ENCODE measurements at regions of chr11 and their contacts with region 1.

Region 1: DNA sequence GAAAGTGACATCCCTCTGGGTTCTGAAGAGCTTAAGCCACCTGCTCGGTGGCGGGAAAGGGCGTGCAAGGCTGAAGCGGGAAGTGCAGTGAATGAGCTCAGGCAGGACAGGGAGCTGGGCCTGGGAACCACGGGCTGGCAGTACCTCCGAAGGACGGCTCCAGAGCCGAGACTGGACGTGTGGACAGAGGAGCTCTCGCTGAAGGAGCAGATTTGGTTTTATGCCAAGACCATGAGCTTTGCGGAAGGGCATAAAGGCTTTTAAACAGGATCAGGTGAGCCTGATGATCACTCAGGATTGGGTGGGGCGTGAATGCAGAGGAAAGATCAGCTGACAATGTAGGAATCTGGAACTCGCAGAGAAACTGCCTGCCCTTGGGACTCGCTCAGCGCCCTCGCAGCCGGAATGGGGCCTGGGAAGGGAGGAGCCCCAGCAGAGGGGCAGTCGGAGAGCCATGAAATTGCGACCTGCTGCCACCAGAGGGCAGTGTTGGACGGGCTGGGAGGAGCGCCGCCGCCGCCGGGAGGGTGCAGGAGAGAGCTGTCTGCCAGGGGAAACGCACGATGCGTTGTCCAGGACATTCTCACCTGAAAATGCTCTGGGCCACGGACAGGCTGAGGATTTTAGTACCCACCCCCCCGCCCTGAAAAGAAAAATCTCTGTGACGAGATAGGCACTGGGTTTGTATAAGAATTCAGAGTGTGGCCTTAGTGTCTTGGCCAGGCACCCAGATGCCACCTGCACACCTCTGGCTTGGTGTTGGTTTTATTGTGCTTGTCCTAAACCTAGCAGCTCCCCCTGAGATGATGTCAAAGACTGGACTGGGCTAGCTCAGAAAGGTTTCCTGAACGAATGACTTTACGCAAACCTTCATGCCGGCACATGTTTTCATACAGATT is 324.4 kb downstream of the NTM start:
- DNase-seq: peak; percentile 92
- ATAC-seq: peak; percentile 85
- H3K4me3 Mint-ChIP-seq: peak overlapping the region; percentile 38
- H3K27ac Mint-ChIP-seq: no peak overlapping the region
- H3K4me1 Mint-ChIP-seq: peaks cover 9% of the 10 kb centered on the region
- H3K27me3 Mint-ChIP-seq: peaks cover 45% of the 10 kb centered on the region
- CTCF ChIP-seq: peak; percentile 96

Region 2: DNA sequence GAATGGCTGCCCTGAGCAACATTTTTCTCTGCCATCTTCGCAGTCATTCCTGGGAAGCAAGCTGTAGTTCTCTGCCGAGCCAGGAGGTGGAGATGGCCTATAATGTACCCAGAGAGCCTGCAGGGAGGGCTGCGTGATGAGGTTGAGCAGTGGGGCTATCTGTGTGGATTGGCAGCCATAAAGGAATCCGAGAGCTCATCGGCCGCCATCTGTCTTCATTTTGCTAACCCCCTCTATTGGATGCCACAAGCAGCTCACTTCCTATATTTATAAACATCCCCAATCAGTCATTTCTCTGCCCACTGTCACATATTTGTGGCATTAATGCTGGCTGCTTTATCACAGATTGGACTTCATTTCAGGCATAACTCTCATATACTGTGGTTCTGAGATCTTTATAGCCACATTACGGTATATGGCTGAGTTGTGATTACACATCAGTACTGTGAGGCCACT is 114.8 kb before region 1 on chr11:
- CTCF ChIA-PET with region 1: interaction called, 22 read pairs
- POLR2A ChIA-PET with region 1: no interaction called
- DNase-seq: peak; percentile 70
- ATAC-seq: peak; percentile 97
- H3K4me3 Mint-ChIP-seq: no peak overlapping the region
- H3K27ac Mint-ChIP-seq: no peak overlapping the region
- H3K4me1 Mint-ChIP-seq: peaks cover 40% of the 10 kb centered on the region
- H3K27me3 Mint-ChIP-seq: no peaks in the 10 kb centered on the region
- CTCF ChIP-seq: peak; percentile 68

Region 3: GRCh38 chr11:131724436-131724975 is 29.7 kb after region 1 on chr11:
- CTCF ChIA-PET with region 1: interaction called, 10 read pairs
- POLR2A ChIA-PET with region 1: no interaction called
- DNase-seq: no peak
- ATAC-seq: no peak
- H3K4me3 Mint-ChIP-seq: no peak overlapping the region
- H3K27ac Mint-ChIP-seq: no peak overlapping the region
- H3K4me1 Mint-ChIP-seq: peaks cover 6% of the 10 kb centered on the region; the same call in 1 of the 2 replicates
- H3K27me3 Mint-ChIP-seq: no peaks in the 10 kb centered on the region
- CTCF ChIP-seq: no peak

Region 4: GRCh38 chr11:131748151-131749050 is 53.6 kb after region 1 on chr11:
- CTCF ChIA-PET with region 1: interaction called, 28 read pairs
- POLR2A ChIA-PET with region 1: no interaction called
- DNase-seq: peak; percentile 74
- ATAC-seq: peak; percentile 89
- H3K4me3 Mint-ChIP-seq: no peak overlapping the region
- H3K27ac Mint-ChIP-seq: no peak overlapping the region
- H3K4me1 Mint-ChIP-seq: peaks cover 7% of the 10 kb centered on the region
- H3K27me3 Mint-ChIP-seq: no peaks in the 10 kb centered on the region
- CTCF ChIP-seq: peak; percentile 77

Region 5: DNA sequence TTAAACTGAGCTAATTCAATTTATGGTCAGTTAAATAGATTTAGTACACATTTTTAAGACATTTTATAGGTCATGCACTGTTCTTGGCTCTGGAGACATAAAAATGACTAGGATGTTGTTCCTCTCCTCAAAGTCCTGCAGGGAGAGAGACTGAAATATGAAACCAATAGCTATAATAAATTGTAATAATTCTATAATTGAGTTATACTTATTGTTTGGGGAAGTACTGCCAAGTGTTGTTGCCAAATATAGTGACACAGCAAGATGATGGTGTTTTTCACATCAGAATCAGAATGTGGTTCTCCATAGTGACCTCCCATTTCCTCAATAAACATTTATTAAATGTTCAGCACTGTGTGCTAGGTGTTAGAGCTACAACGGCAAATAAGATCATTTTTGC is 146.3 kb after region 1 on chr11:
- CTCF ChIA-PET with region 1: interaction called, 14 read pairs
- POLR2A ChIA-PET with region 1: no interaction called
- DNase-seq: no peak
- ATAC-seq: no peak
- H3K4me3 Mint-ChIP-seq: no peak overlapping the region
- H3K27ac Mint-ChIP-seq: no peak overlapping the region
- H3K4me1 Mint-ChIP-seq: peaks cover 44% of the 10 kb centered on the region
- H3K27me3 Mint-ChIP-seq: no peaks in the 10 kb centered on the region; the same call in none of the 2 replicates
- CTCF ChIP-seq: no peak

Region 6: GRCh38 chr11:131889146-131889577 is 194.4 kb after region 1 on chr11:
- CTCF ChIA-PET with region 1: interaction called, 20 read pairs
- POLR2A ChIA-PET with region 1: no interaction called
- DNase-seq: no peak
- ATAC-seq: peak; percentile 59
- H3K4me3 Mint-ChIP-seq: no peak overlapping the region
- H3K27ac Mint-ChIP-seq: no peak overlapping the region
- H3K4me1 Mint-ChIP-seq: 0 out of 2 replicates have a peak, but pooled peaks cover 8% of the 10 kb centered on the region
- H3K27me3 Mint-ChIP-seq: no peaks in the 10 kb centered on the region; the same call in 1 of the 2 replicates
- CTCF ChIP-seq: no peak

Region 7: GRCh38 chr11:131910523-131911387 is 216.0 kb after region 1 on chr11:
- CTCF ChIA-PET with region 1: interaction called, 33 read pairs
- POLR2A ChIA-PET with region 1: no interaction called
- DNase-seq: peak; percentile 50
- ATAC-seq: peak; percentile 32
- H3K4me3 Mint-ChIP-seq: peak overlapping the region; percentile 88
- H3K27ac Mint-ChIP-seq: no peak overlapping the region
- H3K4me1 Mint-ChIP-seq: peaks cover 52% of the 10 kb centered on the region
- H3K27me3 Mint-ChIP-seq: peaks cover 8% of the 10 kb centered on the region; the same call in 1 of the 2 replicates
- CTCF ChIP-seq: no peak

Measured in WTC11 (cell line).